CD8-positive, alpha-beta T cell (primary cell): ENCODE measurements at regions of chr12 and their contacts with region 1.

Region 1: DNA sequence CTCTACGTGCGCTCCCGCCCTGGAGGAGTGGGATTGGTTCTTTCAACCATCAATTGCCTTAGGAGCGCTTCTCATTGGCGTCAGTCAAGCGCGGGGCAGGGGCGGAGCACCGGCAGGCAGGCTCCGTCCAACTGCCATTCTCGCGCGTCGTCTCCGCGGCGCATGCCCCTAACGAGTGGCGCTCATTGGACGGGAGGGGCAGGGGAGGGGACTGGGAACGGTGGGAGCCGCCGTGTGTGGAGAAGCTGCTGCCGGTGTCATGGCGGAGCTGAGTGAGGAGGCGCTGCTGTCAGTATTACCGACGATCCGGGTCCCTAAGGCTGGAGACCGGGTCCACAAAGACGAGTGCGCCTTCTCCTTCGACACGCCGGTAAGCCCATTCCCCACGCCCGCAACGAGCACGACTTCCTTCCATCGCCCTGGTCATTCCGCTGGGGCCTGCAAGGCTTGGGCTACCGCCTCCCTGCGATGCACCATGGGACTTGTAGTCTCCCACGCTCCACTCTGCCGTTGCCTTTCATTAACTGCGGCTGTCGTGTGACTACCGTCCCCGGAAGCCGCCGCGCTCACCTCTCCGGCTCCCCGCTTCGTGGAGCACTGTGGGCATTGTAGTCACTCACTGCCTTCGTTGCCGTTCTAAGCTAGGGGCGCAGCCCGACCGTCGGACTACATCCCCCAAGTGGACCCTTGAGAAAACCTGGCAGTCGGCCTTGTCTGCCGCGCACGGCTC is at the start of gene USP5:
- DNase-seq: peak; percentile 94 to 100 (median 98)
- ATAC-seq: peak; percentile 75
- H3K4me3 ChIP-seq: peak within 1 kb of the TSS; percentile 88 to 89
- H3K4me3 Mint-ChIP-seq: peak within 1 kb of the TSS; percentile 95
- H3K27ac ChIP-seq: peak within 1 kb of the TSS; percentile 78 to 91
- H3K27ac Mint-ChIP-seq: peak within 1 kb of the TSS; percentile 99
- H3K4me1 ChIP-seq: peaks cover 20% of the 10 kb centered on the region
- H3K4me1 Mint-ChIP-seq: peaks cover 22% of the 10 kb centered on the region
- H3K27me3 ChIP-seq: no peaks in the 10 kb centered on the region
- H3K27me3 Mint-ChIP-seq: no peaks in the 10 kb centered on the region
- CTCF ChIP-seq: no peak
- total RNA-seq, gene USP5: 24.0 to 25.9 TPM

Region 2: DNA sequence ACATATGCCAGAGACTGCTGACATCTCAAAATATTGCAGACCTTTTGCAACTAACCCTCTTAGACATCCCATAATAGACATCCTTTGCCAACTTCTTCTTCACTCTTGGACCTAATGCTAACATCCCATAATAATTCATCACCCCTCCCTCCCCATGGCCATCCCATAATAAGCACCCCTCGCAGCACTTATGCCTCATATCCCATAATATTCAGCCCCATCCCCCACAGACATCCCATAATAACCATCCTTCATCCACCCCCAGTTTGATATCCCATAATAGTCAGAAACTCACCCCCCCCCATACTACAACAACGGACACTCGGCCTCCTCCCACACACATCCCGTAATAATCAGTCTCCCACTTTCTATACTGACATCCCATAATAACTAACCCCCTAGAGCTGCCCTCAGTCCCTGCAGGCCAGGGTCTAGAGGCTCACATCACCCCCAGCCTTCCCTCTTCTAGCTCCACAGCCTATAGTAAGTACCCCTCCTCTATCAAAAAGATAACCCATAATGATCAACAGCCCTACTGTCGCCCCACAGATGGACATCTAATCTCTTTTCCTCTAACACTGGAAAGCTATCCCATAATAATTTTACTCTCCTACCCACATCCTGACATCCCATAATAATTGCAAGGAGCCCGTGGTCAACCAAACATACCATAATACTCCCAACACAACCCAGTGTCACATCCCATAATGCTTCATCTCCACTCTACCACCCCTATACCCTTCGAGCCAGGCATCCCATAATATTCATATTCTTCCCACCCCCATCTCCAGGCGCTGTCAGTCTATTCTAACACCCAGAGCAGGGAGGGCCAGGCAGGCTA is 244.1 kb before region 1 on chr12:
- CTCF ChIA-PET with region 1: no interaction called
- POLR2A ChIA-PET with region 1: interaction called, 5 read pairs
- intact Hi-C with region 1: loop called in 1 of 2 experiments (anchors 2 kb)
- DNase-seq: peak in 8 of 9 experiments; percentile 38 to 92 (median 67)
- ATAC-seq: peak; percentile 45
- H3K4me3 ChIP-seq: no peak overlapping the region
- H3K4me3 Mint-ChIP-seq: no peak overlapping the region
- H3K27ac ChIP-seq: peak overlapping the region; percentile 76 to 96
- H3K27ac Mint-ChIP-seq: no peak overlapping the region
- H3K4me1 ChIP-seq: peaks cover 63% of the 10 kb centered on the region
- H3K4me1 Mint-ChIP-seq: peaks cover 48% of the 10 kb centered on the region
- H3K27me3 ChIP-seq: no peaks in the 10 kb centered on the region
- H3K27me3 Mint-ChIP-seq: no peaks in the 10 kb centered on the region
- CTCF ChIP-seq: no peak

Region 3: GRCh38 chr12:6752921-6753771 is 98.9 kb before region 1 on chr12 and contains the start of gene MLF2:
- CTCF ChIA-PET with region 1: interaction called, 7 read pairs
- POLR2A ChIA-PET with region 1: interaction called, 22 read pairs
- intact Hi-C with region 1: loop called (anchors 1 kb)
- DNase-seq: peak; percentile 93 to 98 (median 97)
- ATAC-seq: peak; percentile 87
- H3K4me3 ChIP-seq: peak within 1 kb of the TSS; percentile 92
- H3K4me3 Mint-ChIP-seq: peak within 1 kb of the TSS; percentile 96
- H3K27ac ChIP-seq: peak within 1 kb of the TSS; percentile 83 to 99
- H3K27ac Mint-ChIP-seq: peak within 1 kb of the TSS; percentile 98
- H3K4me1 ChIP-seq: peaks cover 17% of the 10 kb centered on the region
- H3K4me1 Mint-ChIP-seq: peaks cover 21% of the 10 kb centered on the region
- H3K27me3 ChIP-seq: no peaks in the 10 kb centered on the region
- H3K27me3 Mint-ChIP-seq: peaks cover 2% of the 10 kb centered on the region
- CTCF ChIP-seq: peak; percentile 83
- total RNA-seq, gene MLF2: 106 to 111 TPM

Region 4: DNA sequence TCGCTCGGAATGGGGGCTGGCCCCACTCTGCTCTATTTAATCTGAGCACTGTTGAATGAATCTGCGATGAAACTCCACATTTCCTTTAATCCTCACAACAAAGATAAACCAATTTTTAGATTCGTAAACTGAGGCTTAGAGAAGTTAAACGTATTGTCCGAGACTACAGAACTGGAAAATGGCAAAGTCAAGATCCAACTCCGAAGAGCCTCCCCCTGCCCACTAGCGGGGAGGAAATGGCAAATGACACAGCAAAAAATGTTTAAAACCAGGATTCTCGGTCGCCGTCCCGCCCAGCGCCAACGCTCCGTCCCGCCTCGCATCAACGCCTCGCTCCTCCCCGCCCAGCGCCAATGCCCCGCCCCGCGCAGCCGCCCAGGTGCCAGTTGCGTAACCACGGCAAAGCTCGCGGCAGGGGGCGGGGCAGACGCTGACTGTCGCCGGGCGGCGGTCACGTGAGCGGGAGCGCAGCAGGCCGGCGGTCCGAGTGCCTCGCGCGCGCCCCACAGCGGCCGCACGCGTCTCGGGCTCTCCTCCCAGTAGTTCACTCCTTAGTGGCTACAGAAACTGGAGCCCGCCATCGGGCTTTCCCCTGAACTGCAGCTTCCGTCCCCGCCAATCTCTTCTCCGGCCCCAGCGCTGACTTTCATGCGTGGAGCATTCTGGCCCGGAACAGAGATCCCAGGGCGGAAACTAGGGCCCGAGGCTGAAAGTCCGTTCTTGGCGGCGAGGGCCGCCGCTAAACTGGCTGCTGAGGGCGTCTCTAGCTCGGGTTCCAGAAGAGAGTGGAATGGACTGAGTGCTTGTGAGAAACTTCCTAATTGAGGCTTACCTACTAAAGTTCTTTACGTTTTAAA is 38.9 kb after region 1 on chr12:
- CTCF ChIA-PET with region 1: interaction called, 9 read pairs
- POLR2A ChIA-PET with region 1: interaction called, 14 read pairs
- intact Hi-C with region 1: loop called in 1 of 2 experiments (anchors 1 kb)
- DNase-seq: peak; percentile 97 to 100 (median 99)
- ATAC-seq: peak; percentile 94
- H3K4me3 ChIP-seq: peak overlapping the region; percentile 64 to 70
- H3K4me3 Mint-ChIP-seq: peak overlapping the region; percentile 80
- H3K27ac ChIP-seq: peak overlapping the region; percentile 64 to 97
- H3K27ac Mint-ChIP-seq: peak overlapping the region; percentile 90
- H3K4me1 ChIP-seq: peaks cover 11% of the 10 kb centered on the region
- H3K4me1 Mint-ChIP-seq: peaks cover 16% of the 10 kb centered on the region
- H3K27me3 ChIP-seq: no peaks in the 10 kb centered on the region
- H3K27me3 Mint-ChIP-seq: no peaks in the 10 kb centered on the region
- CTCF ChIP-seq: peak; percentile 86

Region 5: DNA sequence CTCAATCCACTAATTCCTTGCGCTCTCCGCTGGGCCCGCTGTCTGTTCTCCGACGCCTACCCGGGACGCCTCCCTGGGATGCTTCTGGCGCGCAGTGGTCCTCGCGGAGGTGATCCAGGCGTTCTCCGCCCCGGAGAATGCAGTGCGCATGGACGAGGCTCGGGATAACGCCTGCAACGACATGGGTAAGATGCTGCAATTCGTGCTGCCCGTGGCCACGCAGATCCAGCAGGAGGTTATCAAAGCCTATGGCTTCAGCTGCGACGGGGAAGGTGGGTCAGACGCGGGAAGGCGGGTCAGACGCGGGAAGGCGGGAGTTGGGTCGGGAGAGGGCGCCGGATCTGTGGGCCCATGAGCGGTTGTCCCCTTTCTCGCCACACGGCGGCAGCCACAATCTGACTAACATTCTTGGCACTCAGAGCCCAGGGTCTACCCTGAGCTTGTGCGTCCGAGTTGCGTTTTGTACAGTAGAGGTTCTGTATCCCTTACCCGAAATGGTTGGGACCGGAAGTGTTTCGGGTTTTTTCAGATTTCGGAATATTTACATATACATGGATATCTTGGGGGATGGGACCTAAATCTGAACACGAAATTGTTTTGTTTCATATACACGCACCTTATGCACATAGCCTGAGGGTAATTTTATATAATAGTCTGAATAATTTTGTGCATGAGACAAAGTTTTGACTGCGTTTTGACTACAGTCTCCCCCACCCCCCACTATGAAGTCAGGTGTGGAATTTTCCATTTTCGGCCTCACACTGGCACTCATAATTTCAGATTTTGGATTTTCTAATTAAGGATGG is 92.5 kb after region 1 on chr12:
- CTCF ChIA-PET with region 1: no interaction called
- POLR2A ChIA-PET with region 1: interaction called, 18 read pairs
- intact Hi-C with region 1: no loop called
- DNase-seq: peak; percentile 67 to 94 (median 89)
- ATAC-seq: peak; percentile 51
- H3K4me3 ChIP-seq: peak overlapping the region; percentile 90 to 97
- H3K4me3 Mint-ChIP-seq: peak overlapping the region; percentile 99
- H3K27ac ChIP-seq: peak overlapping the region; percentile 94 to 97
- H3K27ac Mint-ChIP-seq: peak overlapping the region; percentile 100
- H3K4me1 ChIP-seq: peaks cover 56% of the 10 kb centered on the region
- H3K4me1 Mint-ChIP-seq: peaks cover 63% of the 10 kb centered on the region
- H3K27me3 ChIP-seq: no peaks in the 10 kb centered on the region
- H3K27me3 Mint-ChIP-seq: no peaks in the 10 kb centered on the region
- CTCF ChIP-seq: peak; percentile 87

Region 6: GRCh38 chr12:8026291-8026900 is 1174.3 kb after region 1 on chr12:
- CTCF ChIA-PET with region 1: no interaction called
- POLR2A ChIA-PET with region 1: no interaction called
- intact Hi-C with region 1: loop called in 1 of 2 experiments (anchors 2 kb)
- DNase-seq: peak; percentile 90 to 99 (median 94)
- ATAC-seq: peak; percentile 89
- H3K4me3 ChIP-seq: peak overlapping the region; percentile 84 to 93
- H3K4me3 Mint-ChIP-seq: peak overlapping the region; percentile 95
- H3K27ac ChIP-seq: peak overlapping the region; percentile 97 to 100
- H3K27ac Mint-ChIP-seq: peak overlapping the region; percentile 100
- H3K4me1 ChIP-seq: peaks cover 6% of the 10 kb centered on the region
- H3K4me1 Mint-ChIP-seq: peaks cover 21% of the 10 kb centered on the region
- H3K27me3 ChIP-seq: no peaks in the 10 kb centered on the region
- H3K27me3 Mint-ChIP-seq: no peaks in the 10 kb centered on the region
- CTCF ChIP-seq: no peak